ENCODE measurements at regions of chr11 and their contacts with region 1.

Region 1: DNA sequence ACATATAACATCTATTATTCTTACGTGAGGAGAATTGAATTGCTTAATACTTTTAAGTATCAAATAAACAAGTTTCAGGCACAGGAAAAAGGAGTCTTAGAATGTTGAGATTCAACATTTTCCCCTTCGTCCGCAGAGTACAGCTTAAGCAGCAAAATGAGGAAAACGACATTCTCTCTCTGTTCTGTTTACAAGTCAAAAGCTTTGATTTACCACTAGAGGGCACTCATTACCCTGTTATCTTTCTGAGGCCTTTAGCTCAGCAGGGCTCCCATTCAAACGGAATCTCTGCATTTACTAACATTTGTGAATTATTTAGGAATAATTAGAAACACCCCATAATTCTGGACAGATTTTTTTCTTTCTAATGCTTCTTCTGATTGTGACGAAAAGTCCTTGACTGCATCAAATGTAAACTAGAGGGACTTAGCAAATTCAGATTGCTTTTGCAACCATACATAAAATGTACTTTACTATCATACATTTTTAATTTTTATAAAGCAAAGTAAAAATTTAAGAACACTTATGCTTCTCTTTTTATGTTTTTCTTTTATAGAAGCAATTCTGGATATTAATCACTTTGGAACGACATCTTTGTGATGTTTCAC is 75.0 kb downstream of the JRKL start:
- DNase-seq: peak in 1 of 2 experiments; percentile 66
- H3K4me3 ChIP-seq: no peak overlapping the region
- H3K4me3 Mint-ChIP-seq: no peak overlapping the region
- H3K27ac Mint-ChIP-seq: no peak overlapping the region
- H3K4me1 ChIP-seq: peaks cover 6% of the 10 kb centered on the region
- H3K4me1 Mint-ChIP-seq: no peaks in the 10 kb centered on the region
- H3K27me3 ChIP-seq: no peaks in the 10 kb centered on the region; the same call in 1 of the 2 replicates
- H3K27me3 Mint-ChIP-seq: peaks cover 12% of the 10 kb centered on the region
- CTCF ChIP-seq: peak; percentile 84 to 96

Region 2: GRCh38 chr11:96412761-96413381 is 51.9 kb before region 1 on chr11:
- CTCF ChIA-PET with region 1: no interaction called
- POLR2A ChIA-PET with region 1: no interaction called
- intact Hi-C with region 1: no loop called
- DNase-seq: no peak
- H3K4me3 ChIP-seq: no peak overlapping the region
- H3K4me3 Mint-ChIP-seq: no peak overlapping the region
- H3K27ac Mint-ChIP-seq: no peak overlapping the region
- H3K4me1 ChIP-seq: peaks cover 8% of the 10 kb centered on the region
- H3K4me1 Mint-ChIP-seq: no peaks in the 10 kb centered on the region
- H3K27me3 ChIP-seq: no peaks in the 10 kb centered on the region
- H3K27me3 Mint-ChIP-seq: peaks cover 8% of the 10 kb centered on the region
- CTCF ChIP-seq: no peak

Region 3: DNA sequence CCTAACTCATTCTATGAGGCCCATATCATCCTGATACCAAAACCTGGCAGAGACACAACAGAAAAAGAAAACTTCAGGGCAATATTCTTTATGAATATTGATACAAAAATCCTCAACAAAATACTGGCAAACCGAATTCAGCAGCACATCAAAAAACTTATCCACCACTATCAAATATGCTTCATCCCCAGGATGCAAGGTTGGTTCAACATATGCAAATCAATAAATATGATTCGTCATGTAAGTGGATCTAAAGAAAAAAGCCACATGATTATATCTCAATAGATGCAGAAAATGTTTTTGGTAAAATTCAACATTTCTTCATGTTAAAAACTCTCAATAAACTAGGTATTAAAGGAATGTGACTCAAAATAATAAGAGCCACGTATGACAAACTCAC is 34.1 kb before region 1 on chr11:
- CTCF ChIA-PET with region 1: no interaction called
- POLR2A ChIA-PET with region 1: no interaction called
- intact Hi-C with region 1: no loop called
- DNase-seq: no peak
- H3K4me3 ChIP-seq: no peak overlapping the region
- H3K4me3 Mint-ChIP-seq: no peak overlapping the region
- H3K27ac Mint-ChIP-seq: no peak overlapping the region
- H3K4me1 ChIP-seq: peaks cover 5% of the 10 kb centered on the region; the same call in 1 of the 2 replicates
- H3K4me1 Mint-ChIP-seq: no peaks in the 10 kb centered on the region
- H3K27me3 ChIP-seq: no peaks in the 10 kb centered on the region
- H3K27me3 Mint-ChIP-seq: peaks cover 13% of the 10 kb centered on the region
- CTCF ChIP-seq: no peak

Region 4: DNA sequence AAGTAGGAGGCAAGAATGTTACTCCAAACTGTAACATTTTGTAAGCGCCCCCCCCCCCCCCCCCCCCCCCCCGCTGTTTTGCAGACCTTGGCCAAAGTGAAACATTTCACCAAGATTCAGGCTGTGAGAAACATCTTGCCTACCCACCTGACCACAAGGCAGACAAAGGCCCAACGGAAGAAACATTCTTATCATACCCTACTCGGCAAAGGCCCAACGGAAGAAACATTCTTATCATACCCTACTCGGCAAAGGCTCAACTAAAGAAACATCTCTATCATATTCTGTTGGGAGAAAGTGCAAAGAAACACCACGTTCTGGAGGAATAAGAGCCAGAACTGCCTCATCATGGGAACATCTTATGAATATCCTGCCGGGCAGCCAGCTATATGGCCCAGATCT is 42.1 kb after region 1 on chr11:
- CTCF ChIA-PET with region 1: no interaction called
- POLR2A ChIA-PET with region 1: no interaction called
- intact Hi-C with region 1: loop called (anchors 2 kb)
- DNase-seq: no peak
- H3K4me3 ChIP-seq: no peak overlapping the region
- H3K4me3 Mint-ChIP-seq: no peak overlapping the region
- H3K27ac Mint-ChIP-seq: no peak overlapping the region
- H3K4me1 ChIP-seq: no peaks in the 10 kb centered on the region
- H3K4me1 Mint-ChIP-seq: no peaks in the 10 kb centered on the region
- H3K27me3 ChIP-seq: no peaks in the 10 kb centered on the region
- H3K27me3 Mint-ChIP-seq: no peaks in the 10 kb centered on the region
- CTCF ChIP-seq: no peak

Region 5: GRCh38 chr11:96704847-96705246 is 240.0 kb after region 1 on chr11:
- CTCF ChIA-PET with region 1: interaction called, 8 read pairs
- POLR2A ChIA-PET with region 1: no interaction called
- intact Hi-C with region 1: loop called (anchors 1 kb)
- DNase-seq: peak in 1 of 2 experiments; percentile 20
- H3K4me3 ChIP-seq: no peak overlapping the region
- H3K4me3 Mint-ChIP-seq: no peak overlapping the region
- H3K27ac Mint-ChIP-seq: no peak overlapping the region
- H3K4me1 ChIP-seq: no peaks in the 10 kb centered on the region
- H3K4me1 Mint-ChIP-seq: no peaks in the 10 kb centered on the region
- H3K27me3 ChIP-seq: no peaks in the 10 kb centered on the region
- H3K27me3 Mint-ChIP-seq: peaks cover 16% of the 10 kb centered on the region
- CTCF ChIP-seq: peak in 1 of 2 experiments; percentile 41

Region 6: DNA sequence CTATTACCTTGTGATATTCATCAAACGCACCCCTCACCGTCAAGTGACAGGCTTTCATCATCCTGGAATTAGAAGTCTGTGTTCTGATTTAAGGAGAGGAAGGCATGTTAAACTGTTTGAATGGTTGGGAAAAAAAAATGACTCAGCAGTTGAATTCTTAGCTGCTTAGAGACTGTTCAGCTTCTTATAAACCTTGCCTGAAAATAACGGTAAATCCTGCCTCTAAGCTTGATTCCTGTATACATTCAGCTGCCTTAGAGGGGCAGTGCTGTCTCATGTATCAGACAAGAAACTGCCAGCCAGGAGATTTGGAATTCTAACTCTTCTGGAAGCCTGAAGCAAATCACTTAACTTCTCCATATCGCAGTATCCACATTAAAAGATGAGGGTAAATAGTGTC is 362.4 kb after region 1 on chr11:
- CTCF ChIA-PET with region 1: interaction called, 9 read pairs
- POLR2A ChIA-PET with region 1: interaction called, 3 read pairs
- intact Hi-C with region 1: loop called (anchors 1 kb)
- DNase-seq: peak in 1 of 2 experiments; percentile 19
- H3K4me3 ChIP-seq: no peak overlapping the region
- H3K4me3 Mint-ChIP-seq: no peak overlapping the region
- H3K27ac Mint-ChIP-seq: no peak overlapping the region
- H3K4me1 ChIP-seq: no peaks in the 10 kb centered on the region
- H3K4me1 Mint-ChIP-seq: no peaks in the 10 kb centered on the region
- H3K27me3 ChIP-seq: no peaks in the 10 kb centered on the region; the same call in 1 of the 2 replicates
- H3K27me3 Mint-ChIP-seq: peaks cover 14% of the 10 kb centered on the region
- CTCF ChIP-seq: no peak

Region 7: DNA sequence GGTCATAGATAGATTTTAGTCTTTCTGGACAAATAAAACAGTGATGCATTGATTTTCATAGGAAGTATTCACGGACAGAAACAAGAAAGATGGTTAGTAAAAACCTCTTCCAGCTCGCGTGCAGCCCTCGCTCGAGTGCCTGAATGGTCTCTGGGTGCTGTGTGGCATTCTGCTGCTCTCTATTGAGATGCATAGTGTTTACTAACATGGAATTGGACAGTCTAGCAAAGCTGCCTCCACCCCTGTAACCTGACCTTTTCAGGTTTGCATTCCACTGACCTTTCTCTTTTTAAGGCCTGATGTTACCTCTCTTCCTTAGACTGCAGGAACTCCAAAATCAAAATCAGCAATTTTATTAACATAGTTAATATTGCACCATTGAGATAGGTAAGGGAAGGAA is 568.4 kb after region 1 on chr11:
- CTCF ChIA-PET with region 1: no interaction called
- POLR2A ChIA-PET with region 1: no interaction called
- intact Hi-C with region 1: loop called (anchors 10 kb)
- DNase-seq: no peak
- H3K4me3 ChIP-seq: no peak overlapping the region
- H3K4me3 Mint-ChIP-seq: no peak overlapping the region
- H3K27ac Mint-ChIP-seq: no peak overlapping the region
- H3K4me1 ChIP-seq: no peaks in the 10 kb centered on the region
- H3K4me1 Mint-ChIP-seq: no peaks in the 10 kb centered on the region
- H3K27me3 ChIP-seq: no peaks in the 10 kb centered on the region; the same call in 1 of the 2 replicates
- H3K27me3 Mint-ChIP-seq: peaks cover 2% of the 10 kb centered on the region
- CTCF ChIP-seq: no peak

Region 8: GRCh38 chr11:97516688-97517087 is 1051.9 kb after region 1 on chr11:
- CTCF ChIA-PET with region 1: no interaction called
- POLR2A ChIA-PET with region 1: no interaction called
- intact Hi-C with region 1: loop called (anchors 5 kb)
- DNase-seq: no peak
- H3K4me3 ChIP-seq: no peak overlapping the region
- H3K4me3 Mint-ChIP-seq: no peak overlapping the region
- H3K27ac Mint-ChIP-seq: no peak overlapping the region
- H3K4me1 ChIP-seq: no peaks in the 10 kb centered on the region
- H3K4me1 Mint-ChIP-seq: no peaks in the 10 kb centered on the region
- H3K27me3 ChIP-seq: no peaks in the 10 kb centered on the region
- H3K27me3 Mint-ChIP-seq: no peaks in the 10 kb centered on the region
- CTCF ChIP-seq: no peak